ENCODE measurements at regions of chr7 and their contacts with region 1.

Region 1: DNA sequence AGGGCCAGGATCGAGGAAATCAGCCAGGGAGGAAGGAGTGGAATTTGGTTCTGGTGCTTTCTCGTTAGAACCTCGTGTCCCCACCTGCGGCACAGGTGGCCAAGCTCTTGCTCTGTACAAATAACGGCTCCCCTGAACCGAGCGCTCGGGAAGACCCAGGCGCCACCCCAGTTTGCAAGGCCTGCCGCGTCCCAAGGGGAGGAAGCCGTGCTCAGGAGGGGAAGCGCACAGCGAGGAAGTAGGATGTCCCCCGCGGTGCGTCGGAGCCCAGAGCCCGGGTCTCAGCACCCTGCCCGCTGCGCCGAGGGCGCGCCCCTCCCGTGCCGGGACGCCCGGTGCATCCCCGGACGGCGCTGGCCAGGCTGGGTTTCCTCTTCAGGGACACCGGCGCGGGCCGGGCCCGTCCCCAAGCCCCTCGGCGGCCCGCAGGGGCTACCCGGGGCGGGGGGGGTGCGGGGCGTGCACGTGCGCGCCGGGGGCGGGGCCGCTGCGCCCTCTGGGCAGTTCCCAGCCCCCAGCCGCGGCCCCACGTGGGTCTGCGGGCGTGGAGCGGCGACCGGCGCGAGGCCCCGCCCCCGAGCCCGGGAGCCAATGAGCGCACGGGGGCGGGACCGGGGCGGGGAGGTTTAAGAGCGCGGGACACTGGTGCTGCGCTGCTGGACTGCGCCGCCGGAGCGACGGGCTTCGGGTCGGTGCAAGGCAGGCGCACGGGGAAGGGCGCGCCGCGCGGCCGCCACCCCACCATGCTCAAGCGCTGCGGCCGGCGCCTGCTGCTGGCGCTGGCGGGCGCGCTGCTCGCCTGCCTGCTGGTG is at the start of gene LFNG:
- DNase-seq: peak; percentile 58 to 94 (median 85)
- ATAC-seq: peak; percentile 63
- H3K4me3 ChIP-seq: peak within 1 kb of the TSS; percentile 98 to 100
- H3K4me3 Mint-ChIP-seq: peak within 1 kb of the TSS; percentile 96
- H3K27ac ChIP-seq: peak within 1 kb of the TSS; percentile 53 to 63
- H3K27ac Mint-ChIP-seq: peak within 1 kb of the TSS; percentile 94
- H3K4me1 ChIP-seq: peaks cover 37% of the 10 kb centered on the region
- H3K4me1 Mint-ChIP-seq: peaks cover 44% of the 10 kb centered on the region
- H3K27me3 ChIP-seq: no peaks in the 10 kb centered on the region
- H3K27me3 Mint-ChIP-seq: no peaks in the 10 kb centered on the region
- CTCF ChIP-seq: no peak
- total RNA-seq, gene LFNG: 137 to 140 TPM

Region 2: GRCh38 chr7:2529161-2530070 is 10.1 kb after region 1 on chr7:
- CTCF ChIA-PET with region 1: no interaction called
- POLR2A ChIA-PET with region 1: interaction called, 6 read pairs
- intact Hi-C with region 1: loop called in 1 of 2 experiments (anchors 1 kb)
- DNase-seq: peak in 7 of 9 experiments; percentile 47 to 88 (median 70)
- ATAC-seq: peak; percentile 26
- H3K4me3 ChIP-seq: peak overlapping the region; percentile 46 to 63
- H3K4me3 Mint-ChIP-seq: peak overlapping the region; percentile 79
- H3K27ac ChIP-seq: peak overlapping the region; percentile 71 to 91
- H3K27ac Mint-ChIP-seq: peak overlapping the region; percentile 95
- H3K4me1 ChIP-seq: peaks cover 67% of the 10 kb centered on the region
- H3K4me1 Mint-ChIP-seq: peaks cover 55% of the 10 kb centered on the region
- H3K27me3 ChIP-seq: no peaks in the 10 kb centered on the region
- H3K27me3 Mint-ChIP-seq: no peaks in the 10 kb centered on the region
- CTCF ChIP-seq: no peak

Region 3: GRCh38 chr7:3657206-3657605 is 1137.9 kb after region 1 on chr7:
- CTCF ChIA-PET with region 1: no interaction called
- POLR2A ChIA-PET with region 1: no interaction called
- intact Hi-C with region 1: no loop called
- DNase-seq: no peak
- ATAC-seq: no peak
- H3K4me3 ChIP-seq: no peak overlapping the region
- H3K4me3 Mint-ChIP-seq: no peak overlapping the region
- H3K27ac ChIP-seq: no peak overlapping the region
- H3K27ac Mint-ChIP-seq: no peak overlapping the region
- H3K4me1 ChIP-seq: no peaks in the 10 kb centered on the region
- H3K4me1 Mint-ChIP-seq: no peaks in the 10 kb centered on the region
- H3K27me3 ChIP-seq: no peaks in the 10 kb centered on the region
- H3K27me3 Mint-ChIP-seq: peaks cover 2% of the 10 kb centered on the region
- CTCF ChIP-seq: no peak